Activated naive CD4-positive, alpha-beta T cell treated with anti-CD3 and anti-CD28 coated beads, Interleukin-2, amount 10 ng/mL, durations not matched to agents 7 days and 5 days (primary cell): ENCODE measurements at regions of chr1 and their contacts with region 1.

Region 1: GRCh38 chr1:111030590-111030989 is 66.9 kb upstream of the LRIF1 start:
- DNase-seq: peak; percentile 71
- H3K4me3 Mint-ChIP-seq: no peak overlapping the region
- H3K27ac Mint-ChIP-seq: no peak overlapping the region
- H3K4me1 Mint-ChIP-seq: no peaks in the 10 kb centered on the region
- H3K27me3 Mint-ChIP-seq: peaks cover 23% of the 10 kb centered on the region

Region 2: DNA sequence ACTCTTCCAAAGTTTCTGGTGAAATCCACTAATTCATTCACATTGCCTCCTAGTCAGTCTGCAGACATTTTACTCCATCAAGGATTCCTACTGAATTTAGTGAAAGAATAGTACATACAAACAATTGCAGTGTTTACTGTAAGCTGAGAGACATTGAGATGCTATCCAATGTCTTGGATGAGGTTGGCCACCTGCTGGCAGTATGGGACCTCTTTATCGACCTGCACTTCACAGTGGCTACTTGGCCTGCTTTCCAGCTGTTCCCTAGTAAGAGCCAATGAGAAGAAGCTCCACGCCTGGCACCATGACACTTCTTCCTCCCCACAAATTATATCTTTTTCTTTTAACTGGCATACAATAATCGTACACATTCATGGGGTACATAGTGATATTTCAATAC is 15.4 kb before region 1 on chr1:
- CTCF ChIA-PET with region 1: interaction called, 10 read pairs
- DNase-seq: no peak
- H3K4me3 Mint-ChIP-seq: no peak overlapping the region
- H3K27ac Mint-ChIP-seq: no peak overlapping the region
- H3K4me1 Mint-ChIP-seq: no peaks in the 10 kb centered on the region
- H3K27me3 Mint-ChIP-seq: peaks cover 18% of the 10 kb centered on the region

Region 3: GRCh38 chr1:111045033-111045722 is 14.6 kb after region 1 on chr1:
- CTCF ChIA-PET with region 1: interaction called, 14 read pairs
- DNase-seq: no peak
- H3K4me3 Mint-ChIP-seq: no peak overlapping the region
- H3K27ac Mint-ChIP-seq: no peak overlapping the region
- H3K4me1 Mint-ChIP-seq: no peaks in the 10 kb centered on the region
- H3K27me3 Mint-ChIP-seq: peaks cover 28% of the 10 kb centered on the region

Region 4: DNA sequence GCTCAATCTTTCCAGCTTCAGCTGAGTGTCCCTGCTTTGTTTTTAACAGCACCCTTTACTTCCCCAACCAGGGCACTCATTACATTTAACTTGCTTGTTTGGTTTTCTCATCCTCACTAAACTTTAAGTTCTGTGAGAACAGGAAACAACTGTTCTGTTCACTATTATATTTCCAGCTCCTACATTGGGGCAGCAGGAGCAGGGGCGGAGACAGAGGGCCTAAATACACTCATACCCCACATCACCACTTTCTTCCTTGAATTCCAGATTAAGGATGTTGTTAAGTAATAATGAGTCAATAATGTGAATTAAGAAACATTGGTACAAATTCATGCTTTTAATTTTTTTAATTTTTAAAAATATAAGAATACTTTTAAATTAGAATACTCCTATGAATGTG is 103.3 kb after region 1 on chr1:
- CTCF ChIA-PET with region 1: no interaction called
- DNase-seq: no peak
- H3K4me3 Mint-ChIP-seq: no peak overlapping the region
- H3K27ac Mint-ChIP-seq: no peak overlapping the region
- H3K4me1 Mint-ChIP-seq: peaks cover 29% of the 10 kb centered on the region
- H3K27me3 Mint-ChIP-seq: no peaks in the 10 kb centered on the region

Region 5: GRCh38 chr1:111334169-111334568 is 303.6 kb after region 1 on chr1:
- CTCF ChIA-PET with region 1: interaction called, 19 read pairs
- DNase-seq: peak; percentile 72
- H3K4me3 Mint-ChIP-seq: no peak overlapping the region
- H3K27ac Mint-ChIP-seq: no peak overlapping the region
- H3K4me1 Mint-ChIP-seq: peaks cover 3% of the 10 kb centered on the region
- H3K27me3 Mint-ChIP-seq: peaks cover 5% of the 10 kb centered on the region